ENCODE measurements at regions of chr10 and their contacts with region 1.

Region 1: GRCh38 chr10:102503281-102504220 is at the start of gene SUFU:
- DNase-seq: peak; percentile 98
- ATAC-seq: peak; percentile 74
- H3K4me3 Mint-ChIP-seq: peak within 1 kb of the TSS; percentile 95
- H3K27ac Mint-ChIP-seq: peak within 1 kb of the TSS; percentile 41; the same call in 1 of the 2 replicates
- H3K4me1 Mint-ChIP-seq: peaks cover 8% of the 10 kb centered on the region; the same call in 1 of the 2 replicates
- H3K27me3 Mint-ChIP-seq: peaks cover 12% of the 10 kb centered on the region
- CTCF ChIP-seq: peak; percentile 70
- total RNA-seq, gene SUFU: 11.6 to 13.1 TPM (median 12.8 TPM) in 3 replicates

Region 2: DNA sequence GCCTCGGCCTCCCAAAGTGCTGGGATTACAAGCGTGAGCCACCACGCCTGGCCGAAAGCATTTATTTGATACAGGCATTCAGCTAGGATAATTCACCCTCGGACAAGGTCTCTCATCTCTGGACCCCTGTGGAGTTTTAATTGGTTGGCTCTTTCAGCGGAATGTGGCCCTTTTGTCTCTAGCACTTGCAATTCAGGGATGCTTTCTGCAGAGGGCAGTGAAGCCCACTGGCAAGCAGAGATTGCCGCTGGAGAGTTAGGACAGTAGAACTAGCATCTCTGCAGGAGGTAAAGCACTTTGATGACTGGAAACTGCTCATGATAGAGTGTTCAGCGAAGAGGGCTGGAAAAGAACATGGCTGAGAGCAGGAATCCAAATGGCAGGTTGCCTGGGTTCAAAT is 62.2 kb after region 1 on chr10:
- CTCF ChIA-PET with region 1: interaction called, 14 read pairs
- POLR2A ChIA-PET with region 1: no interaction called
- DNase-seq: peak; percentile 79
- ATAC-seq: peak; percentile 94
- H3K4me3 Mint-ChIP-seq: no peak overlapping the region
- H3K27ac Mint-ChIP-seq: no peak overlapping the region
- H3K4me1 Mint-ChIP-seq: peaks cover 4% of the 10 kb centered on the region
- H3K27me3 Mint-ChIP-seq: peaks cover 94% of the 10 kb centered on the region
- CTCF ChIP-seq: 0 out of 2 replicates have a peak, but pooled peaks have one; percentile 12